PC-9 (cell line): ENCODE measurements at regions of chr9 and their contacts with region 1.

Region 1: DNA sequence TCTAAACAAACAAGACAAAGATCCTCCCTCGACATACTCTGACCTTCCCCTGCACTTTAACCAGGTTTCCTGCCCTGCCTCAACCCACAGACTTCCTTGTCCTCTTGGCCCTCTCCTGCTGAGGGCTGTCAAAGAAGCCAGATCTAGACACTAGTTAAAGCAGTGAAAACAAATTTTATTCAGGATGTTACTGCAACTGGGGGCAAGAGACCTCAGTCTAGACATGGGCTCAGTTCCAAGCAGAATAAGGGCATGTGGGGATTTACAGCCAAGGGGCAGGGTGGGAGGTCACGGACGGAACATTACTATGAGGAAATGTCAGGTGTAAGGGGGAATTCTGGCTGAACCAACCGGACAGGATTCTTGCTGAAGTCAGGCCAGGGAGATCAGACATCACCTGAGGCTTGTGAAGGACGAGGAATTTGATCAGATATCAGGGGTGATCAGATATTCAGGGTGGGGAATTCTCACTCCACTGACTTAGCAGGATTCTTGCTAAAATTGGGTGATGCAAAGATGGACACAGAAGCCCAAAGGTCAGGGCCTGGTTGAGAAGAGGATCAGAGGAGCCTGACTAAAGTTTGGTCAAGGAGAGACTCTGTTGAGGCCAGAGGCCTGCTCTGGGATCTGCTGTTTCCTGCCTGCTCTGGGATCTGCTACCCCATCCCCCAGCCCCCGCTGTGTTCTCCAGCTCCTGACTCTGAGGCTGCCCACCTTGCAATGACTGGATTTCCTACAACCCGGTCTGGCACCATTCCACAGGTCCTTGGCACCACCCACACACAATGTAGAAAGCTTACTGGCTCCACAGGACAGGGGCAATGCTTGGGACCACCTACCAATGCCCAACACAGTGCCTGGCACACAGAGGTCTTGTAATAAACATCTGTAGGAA is 21.5 kb downstream of the GABBR2 start:
- DNase-seq: peak; percentile 87 to 95
- H3K4me3 ChIP-seq: no peak overlapping the region
- H3K27ac ChIP-seq: peak overlapping the region; percentile 94
- H3K4me1 ChIP-seq: peaks cover 41% of the 10 kb centered on the region
- H3K27me3 ChIP-seq: no peaks in the 10 kb centered on the region
- CTCF ChIP-seq: no peak

Region 2: GRCh38 chr9:98374385-98375051 is 312.7 kb before region 1 on chr9:
- CTCF ChIA-PET with region 1: no interaction called
- POLR2A ChIA-PET with region 1: no interaction called
- intact Hi-C with region 1: no loop called
- DNase-seq: peak; percentile 35 to 88
- H3K4me3 ChIP-seq: no peak overlapping the region
- H3K27ac ChIP-seq: peak overlapping the region; percentile 71
- H3K4me1 ChIP-seq: peaks cover 37% of the 10 kb centered on the region
- H3K27me3 ChIP-seq: no peaks in the 10 kb centered on the region
- CTCF ChIP-seq: no peak

Region 3: DNA sequence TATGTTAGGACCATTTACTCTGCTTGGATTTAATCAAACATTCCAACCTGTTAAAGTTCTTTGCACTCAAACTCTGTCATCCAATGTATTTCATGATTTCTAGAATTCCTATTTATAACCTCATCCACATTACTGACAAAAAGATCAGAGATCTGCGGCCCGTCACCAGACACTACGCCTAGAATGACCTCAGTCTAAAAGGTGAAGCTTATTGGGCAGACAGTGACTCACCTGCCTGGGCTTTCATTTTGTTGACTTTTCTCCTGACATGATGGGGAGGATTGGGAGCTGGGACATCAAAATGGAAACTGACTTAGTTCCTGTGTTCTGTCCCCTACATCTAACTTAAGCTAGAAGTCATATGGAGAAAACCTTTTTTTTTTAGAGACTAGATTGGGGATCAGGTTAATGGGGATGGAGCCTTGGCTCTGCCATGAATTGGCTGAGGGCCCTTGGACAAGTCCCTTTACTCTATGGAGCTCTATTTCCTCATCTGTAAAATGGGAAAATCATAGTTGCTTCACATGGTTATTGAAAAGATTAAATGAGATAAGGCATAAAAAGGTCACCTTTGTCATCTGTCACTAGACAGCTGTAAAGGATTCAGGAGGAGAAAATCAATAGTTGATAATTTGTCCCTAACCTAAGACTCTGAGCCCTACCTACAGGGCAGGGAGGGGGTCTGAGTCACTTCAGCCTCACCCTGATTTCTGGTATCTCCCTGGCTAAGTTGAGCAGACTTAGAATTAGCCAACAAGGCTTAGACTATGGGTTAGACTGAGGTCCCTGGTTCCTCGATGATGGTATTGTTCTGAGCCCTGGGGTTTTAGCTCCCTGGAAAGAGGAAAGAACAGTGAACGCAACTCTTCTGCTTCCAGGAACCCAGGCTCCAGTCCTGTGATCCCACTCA is 207.0 kb before region 1 on chr9:
- CTCF ChIA-PET with region 1: no interaction called
- POLR2A ChIA-PET with region 1: no interaction called
- intact Hi-C with region 1: loop called (anchors 1 kb)
- DNase-seq: peak; percentile 65 to 83
- H3K4me3 ChIP-seq: no peak overlapping the region
- H3K27ac ChIP-seq: peak overlapping the region; percentile 76
- H3K4me1 ChIP-seq: peaks cover 31% of the 10 kb centered on the region
- H3K27me3 ChIP-seq: no peaks in the 10 kb centered on the region
- CTCF ChIP-seq: no peak

Region 4: DNA sequence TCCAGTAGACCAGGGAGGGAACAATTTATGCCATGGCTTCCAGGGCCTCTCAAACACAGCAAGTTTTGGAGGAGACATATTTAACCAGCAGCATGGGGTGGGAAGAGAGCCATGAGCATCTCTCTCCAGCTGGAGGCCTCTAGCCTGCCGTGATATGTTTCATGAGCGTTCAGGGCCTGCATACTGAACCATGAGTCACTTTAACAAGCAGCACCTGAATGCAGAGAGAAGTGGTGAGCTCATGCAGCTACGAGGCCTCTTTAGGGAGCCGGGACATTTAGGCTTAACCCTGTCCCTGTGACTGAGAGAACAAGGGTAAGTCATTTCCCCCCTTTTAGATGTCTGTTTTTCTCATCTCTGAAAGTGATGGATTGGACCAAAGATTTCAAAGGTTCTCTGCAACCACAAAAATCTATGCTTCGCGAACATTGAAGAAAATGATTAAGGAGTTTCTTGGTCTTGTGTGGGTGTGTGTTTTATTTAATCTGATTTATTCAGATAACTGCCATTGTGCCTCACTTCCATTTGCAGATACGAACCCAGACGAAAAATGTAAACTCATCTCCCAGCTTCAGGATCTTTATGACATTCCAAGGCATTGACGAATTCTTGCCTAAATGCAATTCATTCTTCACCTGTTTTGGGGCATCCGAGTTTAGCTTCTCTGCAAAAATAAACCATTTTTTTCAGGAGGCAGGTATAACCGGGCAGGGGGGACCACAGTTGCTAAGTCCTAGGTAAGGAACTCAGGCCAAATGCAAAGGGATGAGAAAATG is 135.5 kb before region 1 on chr9:
- CTCF ChIA-PET with region 1: no interaction called
- POLR2A ChIA-PET with region 1: no interaction called
- intact Hi-C with region 1: loop called (anchors 5 kb)
- DNase-seq: peak; percentile 44 to 92
- H3K4me3 ChIP-seq: peak overlapping the region; percentile 9; the same call in 1 of the 2 replicates
- H3K27ac ChIP-seq: peak overlapping the region; percentile 90
- H3K4me1 ChIP-seq: peaks cover 40% of the 10 kb centered on the region
- H3K27me3 ChIP-seq: no peaks in the 10 kb centered on the region
- CTCF ChIP-seq: no peak

Region 5: GRCh38 chr9:98707166-98708102 is 20.2 kb after region 1 on chr9:
- CTCF ChIA-PET with region 1: no interaction called
- POLR2A ChIA-PET with region 1: no interaction called
- intact Hi-C with region 1: no loop called
- DNase-seq: peak; percentile 69 to 81
- H3K4me3 ChIP-seq: peak overlapping the region; percentile 60
- H3K27ac ChIP-seq: peak overlapping the region; percentile 46; the same call in 1 of the 2 replicates
- H3K4me1 ChIP-seq: peaks cover 6% of the 10 kb centered on the region
- H3K27me3 ChIP-seq: peaks cover 22% of the 10 kb centered on the region
- CTCF ChIP-seq: peak; percentile 70

Region 6: DNA sequence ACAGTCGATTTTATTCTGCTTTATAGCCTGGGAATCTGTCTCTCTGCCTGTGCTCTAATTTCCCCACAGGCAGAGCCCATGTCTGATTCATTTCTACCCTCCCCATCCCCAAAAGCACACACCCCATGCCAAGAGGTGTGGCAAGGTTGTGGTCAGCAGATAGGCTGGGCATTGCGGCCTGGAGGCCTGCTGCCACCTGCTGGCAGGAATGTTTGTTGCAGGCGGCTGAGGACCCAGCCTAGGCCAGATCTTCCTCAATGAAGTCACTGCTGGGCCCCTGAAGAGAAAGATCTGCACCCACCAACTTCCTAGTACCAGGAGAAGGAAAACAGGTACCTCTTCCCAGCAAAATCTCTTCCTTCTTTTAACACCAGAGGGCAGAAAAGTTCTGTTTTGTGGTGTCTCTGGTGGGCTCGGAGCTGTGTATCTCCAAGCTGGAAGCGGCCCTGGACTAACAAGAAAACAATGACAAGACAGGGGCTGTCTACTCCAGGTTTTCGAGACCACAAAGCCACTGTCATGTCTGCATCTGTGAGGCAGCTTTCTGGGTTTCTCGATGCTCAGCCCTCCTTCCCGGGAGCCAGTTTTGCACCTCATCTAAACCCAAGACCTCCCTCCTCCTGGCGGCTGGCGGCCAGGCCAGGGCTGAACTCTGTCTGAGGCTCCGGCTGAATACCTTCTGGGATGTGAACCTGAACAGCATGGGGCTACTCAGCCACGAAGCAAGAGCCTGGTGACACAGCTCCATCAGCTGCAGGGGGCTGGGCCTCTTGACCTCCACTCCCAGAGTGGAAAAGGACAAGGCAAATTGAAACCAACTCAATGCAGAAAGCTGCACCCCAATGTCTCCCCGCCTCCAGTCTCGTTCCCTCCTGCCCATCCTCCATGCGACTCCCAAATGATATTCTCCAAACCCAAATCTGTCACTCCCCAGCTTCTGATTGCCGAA is 104.2 kb after region 1 on chr9:
- CTCF ChIA-PET with region 1: no interaction called
- POLR2A ChIA-PET with region 1: no interaction called
- intact Hi-C with region 1: loop called (anchors 2 kb)
- DNase-seq: peak; percentile 92 to 96
- H3K4me3 ChIP-seq: 0 out of 2 replicates have a peak overlapping the region, but pooled peaks have one; percentile 30
- H3K27ac ChIP-seq: peak overlapping the region; percentile 70
- H3K4me1 ChIP-seq: peaks cover 59% of the 10 kb centered on the region
- H3K27me3 ChIP-seq: no peaks in the 10 kb centered on the region
- CTCF ChIP-seq: peak; percentile 100